ENCODE measurements at regions of chr4 and their contacts with region 1.

Region 1: DNA sequence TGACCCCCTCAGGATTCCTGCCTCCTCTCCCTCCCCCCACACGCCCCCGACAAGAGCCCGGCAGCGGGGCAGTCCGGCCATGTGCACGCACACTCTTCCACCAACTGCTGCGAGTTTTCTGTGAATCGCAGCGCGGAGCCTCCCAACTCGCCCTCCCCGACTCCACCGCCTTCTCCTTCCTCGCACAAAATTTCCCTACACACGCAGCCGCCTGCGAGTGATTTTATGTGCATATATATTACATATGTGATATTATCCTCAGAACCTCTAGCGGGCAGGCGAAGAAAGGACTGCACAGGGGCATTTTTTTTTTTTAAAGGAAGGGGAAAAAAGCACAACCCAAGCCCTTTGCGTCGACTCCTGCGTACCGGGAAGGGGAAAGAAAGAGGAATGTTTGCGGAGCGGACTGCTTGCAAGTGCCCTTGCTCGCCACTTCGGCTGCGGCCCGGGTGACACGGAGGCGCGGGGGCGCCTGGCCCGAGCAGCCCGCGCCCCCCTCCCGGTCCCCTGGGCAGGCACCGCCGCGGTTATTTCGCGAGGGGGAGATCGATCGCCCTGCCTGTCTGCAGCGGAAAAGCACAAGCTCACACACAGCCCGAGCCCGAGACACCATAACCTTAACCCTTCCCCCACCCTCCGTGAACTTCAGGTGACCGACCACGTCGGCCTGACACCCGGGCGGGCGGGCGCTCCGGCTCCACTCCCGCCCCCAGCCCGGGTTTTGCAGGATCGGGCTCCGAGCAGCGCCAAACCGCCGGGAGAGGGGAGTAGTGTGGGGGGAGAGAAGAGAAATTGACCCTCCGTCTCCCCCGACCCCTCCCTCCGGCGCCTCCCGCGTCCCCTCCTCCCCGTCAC is 2.3 kb downstream of the ZNF827 start:
- DNase-seq: peak; percentile 33 to 86 (median 70)

Region 2: DNA sequence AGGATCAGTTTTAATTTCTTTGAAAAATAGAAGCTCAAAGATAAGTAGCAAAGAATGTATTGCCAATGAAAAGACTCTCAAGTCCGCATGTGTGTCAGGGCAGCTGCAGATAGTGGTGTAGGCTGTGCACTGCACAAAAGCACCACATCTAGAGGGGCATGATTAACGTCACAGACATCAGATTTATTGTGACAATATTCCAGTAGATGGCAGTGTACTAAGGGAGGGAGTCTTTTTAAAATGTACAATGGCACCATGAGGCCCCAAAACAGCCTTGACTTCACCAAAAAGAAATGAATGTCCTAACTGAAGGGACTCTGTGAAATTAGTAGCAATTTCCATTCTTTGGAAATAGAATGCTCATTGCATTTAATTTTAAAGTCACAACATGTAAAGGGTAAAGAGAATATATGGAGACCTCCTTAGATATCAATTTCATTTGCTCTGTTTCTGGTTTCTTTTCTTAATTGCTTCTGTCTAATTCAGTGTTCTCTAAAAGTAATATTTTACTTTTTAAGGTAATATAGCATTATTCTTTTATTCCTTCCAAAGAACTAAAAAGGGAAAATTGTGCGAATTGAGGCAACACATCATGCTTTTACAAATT is 96.1 kb before region 1 on chr4:
- intact Hi-C with region 1: loop called (anchors 10 kb)
- DNase-seq: peak in 13 of 42 donors; percentile 15 to 54 (median 28)

Region 3: DNA sequence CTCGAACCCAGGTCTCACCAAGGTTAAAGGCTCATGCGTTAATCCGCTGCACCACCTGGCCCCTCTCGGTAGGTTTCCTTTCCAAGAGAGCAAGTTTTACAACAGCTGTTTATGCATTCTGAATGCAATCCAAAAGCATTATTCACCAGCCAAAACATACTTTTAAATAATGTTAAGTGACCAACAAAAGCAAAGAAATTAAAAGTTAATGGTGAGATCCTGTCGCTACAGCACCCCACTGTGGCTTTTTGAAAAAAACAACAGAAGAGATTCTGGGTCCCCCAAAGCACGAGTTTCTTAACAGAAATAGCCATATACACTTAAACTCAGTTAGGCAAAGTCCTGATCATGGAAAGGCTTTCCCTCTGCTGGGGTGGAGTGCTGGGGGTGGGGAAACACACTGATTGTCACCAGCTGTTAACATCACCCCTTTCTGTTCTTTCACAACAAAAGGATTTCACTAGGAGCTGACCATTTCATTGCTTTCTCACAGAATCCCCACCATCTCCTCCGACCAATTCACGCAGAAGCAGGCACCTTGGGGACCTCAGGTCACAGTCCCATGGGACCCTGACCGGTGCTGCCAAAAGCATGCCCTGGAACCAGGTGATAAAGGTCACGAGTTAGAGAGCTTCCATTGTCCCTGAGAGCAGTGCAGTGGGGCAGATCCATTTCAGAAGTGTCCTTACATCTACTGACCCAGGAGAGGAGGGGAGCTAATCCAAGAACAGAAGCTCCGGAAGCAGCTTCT is 49.0 kb before region 1 on chr4:
- intact Hi-C with region 1: loop called (anchors 10 kb)
- DNase-seq: peak in 1 of 42 donors; percentile 48

Region 4: DNA sequence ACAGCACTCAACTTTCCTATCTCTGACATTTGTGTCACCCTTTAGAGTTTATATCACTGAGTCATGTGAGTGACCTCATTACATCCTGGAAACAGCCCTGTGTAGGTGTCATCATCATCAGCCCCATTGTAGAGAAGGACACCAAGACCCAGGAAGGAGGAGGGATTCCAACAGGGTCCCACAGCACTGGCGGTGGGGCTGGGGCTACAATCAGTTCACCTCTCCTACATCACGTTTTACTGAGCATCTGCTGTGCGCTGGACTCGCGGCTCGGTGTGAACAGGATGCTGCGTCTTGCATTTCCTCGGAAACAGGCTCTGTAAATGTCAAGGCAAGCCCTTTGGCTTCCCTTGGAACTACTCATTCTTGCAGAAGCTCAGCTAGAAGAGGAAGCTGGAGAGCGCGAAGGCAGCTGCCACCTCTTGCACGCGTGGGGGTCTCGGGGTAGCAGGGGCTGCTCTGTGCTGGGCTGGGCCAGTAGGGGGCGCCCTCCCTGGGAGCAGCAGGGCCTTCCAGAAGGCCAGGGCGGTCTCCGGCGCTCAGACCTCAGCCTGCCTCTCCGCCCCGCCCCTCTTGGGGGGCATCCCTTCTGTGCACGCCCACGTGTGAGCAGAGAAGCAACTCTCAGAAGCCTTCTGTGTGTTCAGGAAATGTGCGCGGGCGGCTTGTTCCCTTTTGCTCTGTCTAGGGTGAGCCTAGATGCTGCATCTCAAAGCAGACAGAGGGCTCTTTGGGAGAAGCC is 306.9 kb after region 1 on chr4:
- intact Hi-C with region 1: no loop called
- DNase-seq: peak; percentile 42 to 92 (median 76)

Measured in head of caudate nucleus (tissue), 42 donors.